ENCODE measurements at regions of chr7 and their contacts with region 1.

Region 1: GRCh38 chr7:5780801-5781496 is 514 bp downstream of the RNF216 start:
- DNase-seq: peak; percentile 53
- H3K4me3 Mint-ChIP-seq: peak overlapping the region; percentile 79
- H3K27ac Mint-ChIP-seq: peak overlapping the region; percentile 76
- H3K4me1 Mint-ChIP-seq: peaks cover 38% of the 10 kb centered on the region
- H3K27me3 Mint-ChIP-seq: no peaks in the 10 kb centered on the region

Region 2: GRCh38 chr7:5545222-5545914 is 235.6 kb before region 1 on chr7:
- CTCF ChIA-PET with region 1: no interaction called
- POLR2A ChIA-PET with region 1: no interaction called
- intact Hi-C with region 1: no loop called
- DNase-seq: no peak
- H3K4me3 Mint-ChIP-seq: no peak overlapping the region
- H3K27ac Mint-ChIP-seq: no peak overlapping the region
- H3K4me1 Mint-ChIP-seq: peaks cover 7% of the 10 kb centered on the region
- H3K27me3 Mint-ChIP-seq: no peaks in the 10 kb centered on the region

Region 3: GRCh38 chr7:5754981-5755599 is 25.9 kb before region 1 on chr7:
- CTCF ChIA-PET with region 1: no interaction called
- POLR2A ChIA-PET with region 1: no interaction called
- intact Hi-C with region 1: no loop called
- DNase-seq: no peak
- H3K4me3 Mint-ChIP-seq: no peak overlapping the region
- H3K27ac Mint-ChIP-seq: no peak overlapping the region
- H3K4me1 Mint-ChIP-seq: peaks cover 9% of the 10 kb centered on the region
- H3K27me3 Mint-ChIP-seq: no peaks in the 10 kb centered on the region

Region 4: GRCh38 chr7:5766321-5766761 is 14.6 kb before region 1 on chr7:
- CTCF ChIA-PET with region 1: interaction called, 18 read pairs
- POLR2A ChIA-PET with region 1: no interaction called
- intact Hi-C with region 1: no loop called
- DNase-seq: no peak
- H3K4me3 Mint-ChIP-seq: no peak overlapping the region
- H3K27ac Mint-ChIP-seq: peak overlapping the region; percentile 2
- H3K4me1 Mint-ChIP-seq: peaks cover 31% of the 10 kb centered on the region
- H3K27me3 Mint-ChIP-seq: no peaks in the 10 kb centered on the region

Region 5: GRCh38 chr7:5822742-5823503 is 42.0 kb after region 1 on chr7:
- CTCF ChIA-PET with region 1: interaction called, 6 read pairs
- POLR2A ChIA-PET with region 1: no interaction called
- intact Hi-C with region 1: loop called (anchors 1 kb)
- DNase-seq: peak; percentile 98
- H3K4me3 Mint-ChIP-seq: peak overlapping the region; percentile 74
- H3K27ac Mint-ChIP-seq: peak overlapping the region; percentile 76
- H3K4me1 Mint-ChIP-seq: peaks cover 27% of the 10 kb centered on the region
- H3K27me3 Mint-ChIP-seq: no peaks in the 10 kb centered on the region

Region 6: DNA sequence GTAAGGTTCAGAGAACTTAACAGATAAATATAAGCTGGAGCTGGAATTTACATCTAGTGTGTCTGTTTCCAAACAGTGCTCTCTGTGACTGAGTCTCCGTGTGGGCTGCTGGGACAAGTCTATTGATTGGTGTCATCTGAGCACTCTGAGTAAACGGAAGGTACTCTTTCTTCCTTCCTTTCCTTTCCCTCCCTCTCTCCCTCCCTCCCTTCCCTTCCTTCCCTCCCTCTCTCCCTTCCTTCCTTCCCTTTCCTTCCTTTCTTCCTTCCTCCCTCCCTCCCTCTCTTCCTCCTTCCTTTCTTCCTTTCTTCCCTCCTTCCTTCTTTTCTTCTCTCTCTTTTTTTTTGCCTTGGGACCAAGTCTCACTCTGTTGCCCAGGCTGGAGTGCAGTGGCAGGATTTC is 312.0 kb after region 1 on chr7:
- CTCF ChIA-PET with region 1: no interaction called
- POLR2A ChIA-PET with region 1: no interaction called
- intact Hi-C with region 1: no loop called
- DNase-seq: no peak
- H3K4me3 Mint-ChIP-seq: no peak overlapping the region
- H3K27ac Mint-ChIP-seq: no peak overlapping the region
- H3K4me1 Mint-ChIP-seq: no peaks in the 10 kb centered on the region
- H3K27me3 Mint-ChIP-seq: peaks cover 12% of the 10 kb centered on the region

Measured in activated CD4-positive, alpha-beta memory T cell treated with anti-CD3 and anti-CD28 coated beads for 36 hours (primary cell).